ENCODE measurements at regions of chr12 and their contacts with region 1.

Region 1: GRCh38 chr12:26287671-26288381 is 92.5 kb downstream of the SSPN start:
- DNase-seq: peak; percentile 36 to 77 (median 71)
- H3K4me3 ChIP-seq: peak overlapping the region in 1 of 7 experiments; percentile 31
- H3K27ac ChIP-seq: no peak overlapping the region
- H3K4me1 ChIP-seq: peaks cover 3 to 33% (median 21%) of the 10 kb centered on the region in 4 experiments
- H3K27me3 ChIP-seq: no peaks in the 10 kb centered on the region

Region 2: GRCh38 chr12:26212396-26212795 is 75.4 kb before region 1 on chr12:
- CTCF ChIA-PET with region 1: no interaction called
- POLR2A ChIA-PET with region 1: no interaction called
- DNase-seq: no peak
- H3K4me3 ChIP-seq: no peak overlapping the region
- H3K27ac ChIP-seq: no peak overlapping the region
- H3K4me1 ChIP-seq: peaks cover 0 to 6% (median 0%) of the 10 kb centered on the region in 4 experiments
- H3K27me3 ChIP-seq: no peaks in the 10 kb centered on the region

Region 3: DNA sequence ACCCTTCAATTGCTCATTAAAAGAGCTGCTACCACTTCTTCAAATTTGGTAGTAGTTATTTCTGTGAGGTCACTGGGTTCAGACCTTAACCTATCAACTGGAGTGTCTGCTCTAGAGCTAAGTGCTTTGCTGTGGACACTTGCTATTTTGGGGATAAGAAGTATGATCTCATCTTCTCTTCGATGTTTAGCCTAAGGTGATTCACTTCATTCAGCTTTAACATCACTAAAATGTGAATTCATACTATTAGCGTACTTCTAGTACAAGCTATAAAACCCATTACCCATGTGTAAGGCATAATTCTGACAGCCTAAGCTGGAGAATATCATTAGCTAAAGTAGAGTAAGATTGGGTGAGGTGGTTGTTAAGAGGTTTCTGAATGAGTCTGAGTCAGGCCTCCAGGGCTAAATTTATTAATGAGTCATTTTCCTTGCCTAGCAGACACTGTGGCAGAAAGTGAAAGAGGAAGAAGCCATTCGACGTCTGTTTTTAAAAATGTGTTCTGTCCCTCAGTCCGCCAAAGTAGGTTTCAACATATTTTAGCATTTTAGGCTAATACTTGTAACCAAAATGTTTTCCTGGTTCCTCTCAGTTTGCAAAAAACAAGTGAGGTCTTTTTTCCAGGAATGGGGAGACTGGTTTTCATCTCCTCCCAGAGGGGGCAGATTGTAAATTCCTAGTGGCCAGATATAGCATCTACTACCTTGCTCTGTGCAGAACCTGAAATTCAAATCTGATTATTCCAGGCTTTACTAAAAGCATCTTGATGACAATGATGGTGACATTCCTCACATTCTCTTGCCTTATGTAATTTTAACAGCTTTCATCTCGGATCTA is 11.2 kb after region 1 on chr12:
- CTCF ChIA-PET with region 1: interaction called, 21 read pairs
- POLR2A ChIA-PET with region 1: no interaction called
- DNase-seq: peak; percentile 74 to 93 (median 90)
- H3K4me3 ChIP-seq: peak overlapping the region in 6 of 7 experiments; percentile 40 to 74 (median 60)
- H3K27ac ChIP-seq: peak overlapping the region; percentile 4 to 79
- H3K4me1 ChIP-seq: peaks cover 2 to 15% (median 13%) of the 10 kb centered on the region in 4 experiments
- H3K27me3 ChIP-seq: no peaks in the 10 kb centered on the region

Measured in common myeloid progenitor, CD34-positive (primary cell).